ENCODE measurements at regions of chr1 and their contacts with region 1.

Region 1: GRCh38 chr1:199463521-199464128 is 563.9 kb upstream of the NR5A2 start:
- DNase-seq: peak; percentile 71
- H3K4me3 ChIP-seq: no peak overlapping the region
- H3K27ac ChIP-seq: no peak overlapping the region
- H3K4me1 ChIP-seq: peaks cover 5% of the 10 kb centered on the region
- H3K27me3 ChIP-seq: no peaks in the 10 kb centered on the region
- CTCF ChIP-seq: peak; percentile 67 to 68
- POLR2A ChIP-seq: no peak

Region 2: GRCh38 chr1:198756470-198756869 is 707.2 kb before region 1 on chr1:
- CTCF ChIA-PET with region 1: interaction called, 33 read pairs
- POLR2A ChIA-PET with region 1: no interaction called
- dilution Hi-C with region 1: no loop called
- intact Hi-C with region 1: loop called (anchors 1 kb)
- DNase-seq: peak; percentile 27
- H3K4me3 ChIP-seq: no peak overlapping the region
- H3K27ac ChIP-seq: no peak overlapping the region
- H3K4me1 ChIP-seq: no peaks in the 10 kb centered on the region
- H3K27me3 ChIP-seq: no peaks in the 10 kb centered on the region
- CTCF ChIP-seq: no peak
- POLR2A ChIP-seq: no peak

Region 3: DNA sequence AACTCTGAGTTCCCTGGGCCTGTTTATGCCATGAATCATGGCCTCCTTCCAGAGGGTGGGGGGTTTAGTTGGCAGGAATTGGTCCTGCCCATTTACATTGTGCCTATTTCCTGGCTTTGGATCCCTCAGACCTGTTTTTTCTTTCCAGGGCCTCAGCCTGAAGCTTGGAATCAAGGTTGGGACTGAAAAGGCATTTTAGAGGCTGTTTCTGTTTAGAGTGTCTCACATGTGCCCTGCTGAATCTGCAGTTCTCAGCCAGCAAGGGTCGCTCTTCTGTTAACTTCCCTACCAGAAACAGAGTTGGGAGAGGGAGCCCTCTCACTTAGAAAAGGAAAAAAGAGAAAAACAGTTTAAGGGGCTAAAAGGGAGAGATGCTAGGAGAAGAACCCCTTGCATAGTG is 633.7 kb before region 1 on chr1:
- CTCF ChIA-PET with region 1: interaction called, 11 read pairs
- POLR2A ChIA-PET with region 1: no interaction called
- dilution Hi-C with region 1: no loop called
- intact Hi-C with region 1: loop called (anchors 1 kb)
- DNase-seq: peak; percentile 66
- H3K4me3 ChIP-seq: no peak overlapping the region
- H3K27ac ChIP-seq: no peak overlapping the region
- H3K4me1 ChIP-seq: peaks cover 13% of the 10 kb centered on the region
- H3K27me3 ChIP-seq: no peaks in the 10 kb centered on the region
- CTCF ChIP-seq: peak in 1 of 2 donors; percentile 25
- POLR2A ChIP-seq: no peak

Region 4: GRCh38 chr1:198892065-198892464 is 571.6 kb before region 1 on chr1:
- CTCF ChIA-PET with region 1: interaction called, 5 read pairs
- POLR2A ChIA-PET with region 1: no interaction called
- dilution Hi-C with region 1: no loop called
- intact Hi-C with region 1: loop called (anchors 1 kb)
- DNase-seq: peak; percentile 87
- H3K4me3 ChIP-seq: no peak overlapping the region
- H3K27ac ChIP-seq: peak overlapping the region; percentile 74
- H3K4me1 ChIP-seq: peaks cover 44% of the 10 kb centered on the region
- H3K27me3 ChIP-seq: no peaks in the 10 kb centered on the region
- CTCF ChIP-seq: no peak
- POLR2A ChIP-seq: no peak

Region 5: GRCh38 chr1:199243423-199244061 is 220.1 kb before region 1 on chr1:
- CTCF ChIA-PET with region 1: interaction called, 18 read pairs
- POLR2A ChIA-PET with region 1: no interaction called
- dilution Hi-C with region 1: no loop called
- intact Hi-C with region 1: loop called (anchors 1 kb)
- DNase-seq: peak; percentile 58
- H3K4me3 ChIP-seq: no peak overlapping the region
- H3K27ac ChIP-seq: no peak overlapping the region
- H3K4me1 ChIP-seq: no peaks in the 10 kb centered on the region
- H3K27me3 ChIP-seq: no peaks in the 10 kb centered on the region
- CTCF ChIP-seq: peak; percentile 67 to 87
- POLR2A ChIP-seq: no peak

Region 6: DNA sequence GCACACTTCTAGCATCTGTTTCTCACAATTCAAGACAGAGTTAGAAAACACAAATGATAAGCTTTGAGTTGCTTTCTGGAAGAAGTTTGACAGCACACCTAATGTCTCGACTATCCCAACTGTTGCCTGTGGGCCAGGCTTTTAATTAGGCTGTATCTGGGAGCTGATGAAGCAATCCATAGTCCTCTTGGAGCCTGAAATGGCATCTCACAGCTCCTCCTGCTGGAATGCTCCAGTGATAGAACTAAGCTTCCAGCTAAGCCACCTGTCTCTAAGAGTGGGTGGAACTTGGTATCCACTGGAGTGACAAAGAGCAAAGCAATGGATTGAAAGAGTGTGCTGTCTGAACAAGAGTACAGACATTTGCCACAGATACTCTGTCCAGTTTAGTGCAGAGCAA is 41.4 kb before region 1 on chr1:
- CTCF ChIA-PET with region 1: interaction called, 19 read pairs
- POLR2A ChIA-PET with region 1: no interaction called
- dilution Hi-C with region 1: no loop called
- intact Hi-C with region 1: no loop called
- DNase-seq: peak; percentile 53
- H3K4me3 ChIP-seq: no peak overlapping the region
- H3K27ac ChIP-seq: no peak overlapping the region
- H3K4me1 ChIP-seq: no peaks in the 10 kb centered on the region
- H3K27me3 ChIP-seq: no peaks in the 10 kb centered on the region
- CTCF ChIP-seq: peak in 1 of 2 donors; percentile 47
- POLR2A ChIP-seq: no peak

Region 7: GRCh38 chr1:199529324-199529723 is 65.7 kb after region 1 on chr1:
- CTCF ChIA-PET with region 1: no interaction called
- POLR2A ChIA-PET with region 1: no interaction called
- dilution Hi-C with region 1: no loop called
- intact Hi-C with region 1: no loop called
- DNase-seq: no peak
- H3K4me3 ChIP-seq: no peak overlapping the region
- H3K27ac ChIP-seq: no peak overlapping the region
- H3K4me1 ChIP-seq: no peaks in the 10 kb centered on the region
- H3K27me3 ChIP-seq: peaks cover 0 to 4% of the 10 kb centered on the region in 2 experiments
- CTCF ChIP-seq: no peak
- POLR2A ChIP-seq: no peak

Region 8: DNA sequence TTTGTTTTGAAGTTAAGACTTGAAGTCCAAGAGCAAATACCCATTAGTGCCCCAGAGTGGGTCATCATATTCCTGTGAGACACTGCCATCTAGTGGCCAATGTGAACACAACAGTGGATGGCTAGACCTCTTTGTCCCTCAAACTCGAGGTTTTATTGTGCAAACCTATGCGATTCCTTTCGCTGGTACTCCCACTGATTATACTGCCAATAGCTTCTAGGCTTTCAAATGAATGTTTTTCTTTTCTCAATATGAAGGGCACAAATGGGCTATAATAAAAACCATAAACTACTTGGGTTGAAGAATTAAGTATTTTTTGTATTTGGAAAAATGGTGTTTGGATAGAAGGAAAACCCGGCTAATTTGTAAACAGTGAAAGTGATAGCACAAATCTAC is 1046.6 kb after region 1 on chr1:
- CTCF ChIA-PET with region 1: no interaction called
- POLR2A ChIA-PET with region 1: no interaction called
- dilution Hi-C with region 1: no loop called
- intact Hi-C with region 1: loop called (anchors 10 kb)
- DNase-seq: peak; percentile 79
- H3K4me3 ChIP-seq: no peak overlapping the region
- H3K27ac ChIP-seq: no peak overlapping the region
- H3K4me1 ChIP-seq: no peaks in the 10 kb centered on the region
- H3K27me3 ChIP-seq: peaks cover 8 to 12% of the 10 kb centered on the region in 2 experiments
- CTCF ChIP-seq: peak; percentile 70 to 77
- POLR2A ChIP-seq: no peak

Measured in endothelial cell of umbilical vein (primary cell).